Panc1 (cell line): ENCODE measurements at regions of chr10 and their contacts with region 1.

Region 1: DNA sequence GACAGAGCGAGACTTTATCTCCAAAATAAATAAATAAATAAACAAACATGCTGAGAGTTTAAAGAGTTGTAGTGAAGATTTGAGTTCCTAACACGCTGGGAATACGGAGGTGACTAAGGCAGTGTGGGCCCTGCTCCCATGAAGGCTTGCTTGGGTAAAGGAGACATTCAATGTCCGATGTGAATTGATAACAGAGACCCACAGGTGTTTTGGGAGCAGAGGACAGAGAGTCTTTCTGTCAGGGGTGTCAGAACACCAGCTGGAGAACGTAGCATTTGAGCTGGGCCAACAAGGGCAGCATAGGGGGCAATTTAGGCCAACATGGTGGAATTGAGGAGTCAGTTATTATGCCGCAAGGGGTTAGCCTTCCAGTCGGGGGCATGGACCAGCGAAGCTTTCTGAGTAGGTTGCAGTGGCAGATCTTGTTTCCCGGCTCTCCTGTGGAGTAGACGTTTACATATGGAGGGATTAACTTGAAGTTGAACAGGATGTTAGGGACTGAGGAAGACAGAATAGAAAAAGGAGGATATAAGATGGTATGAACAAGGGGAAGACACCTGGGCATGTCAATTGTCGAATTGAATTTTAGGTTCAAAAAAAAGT is 5.6 kb downstream of the PROSER2 start:
- DNase-seq: no peak
- ATAC-seq: no peak
- H3K4me3 ChIP-seq: no peak overlapping the region
- H3K27ac ChIP-seq: no peak overlapping the region
- H3K4me1 ChIP-seq: peaks cover 11% of the 10 kb centered on the region
- H3K27me3 ChIP-seq: peaks cover 2% of the 10 kb centered on the region; the same call in 1 of the 2 replicates
- CTCF ChIP-seq: no peak

Region 2: DNA sequence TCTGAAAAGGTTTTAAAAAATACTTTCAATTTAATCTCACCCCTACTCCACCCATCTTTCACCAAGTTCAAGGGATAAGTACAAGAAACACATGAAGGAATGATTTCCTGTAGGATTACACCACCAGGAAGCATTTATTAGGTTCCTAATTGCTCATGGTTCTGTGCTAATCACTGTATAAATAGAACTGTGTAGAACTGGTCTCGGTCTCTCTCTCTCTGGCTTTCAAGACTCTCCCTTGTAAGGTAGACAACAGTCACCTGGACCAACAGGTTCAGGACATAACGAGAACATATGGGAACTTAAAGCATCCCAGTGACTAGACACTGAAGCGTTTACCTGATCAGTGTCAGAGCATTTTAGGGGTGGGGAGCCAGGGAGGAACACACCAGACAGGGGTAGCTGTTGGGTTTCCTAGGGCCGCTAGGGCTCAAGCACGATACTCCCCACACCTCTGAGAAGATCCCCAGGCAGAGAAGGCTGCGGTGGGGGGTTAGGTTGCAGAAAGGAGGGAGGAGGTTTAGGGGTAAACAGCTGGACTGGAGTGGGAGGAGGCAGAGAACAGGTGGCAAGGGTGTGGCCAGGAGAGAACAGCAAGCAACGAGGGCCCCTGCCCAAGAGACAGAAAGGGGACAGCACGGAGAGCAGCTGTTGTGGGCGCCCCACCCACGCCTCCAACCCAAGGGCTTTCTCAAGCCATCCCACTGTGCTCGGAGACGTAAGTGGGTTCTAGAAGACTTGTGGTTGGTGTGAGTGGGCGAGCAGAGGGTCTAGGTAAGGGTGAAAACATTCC is 164.8 kb before region 1 on chr10:
- CTCF ChIA-PET with region 1: no interaction called
- POLR2A ChIA-PET with region 1: no interaction called
- in situ Hi-C with region 1: no loop called
- intact Hi-C with region 1: no loop called
- DNase-seq: no peak
- ATAC-seq: no peak
- H3K4me3 ChIP-seq: no peak overlapping the region
- H3K27ac ChIP-seq: no peak overlapping the region
- H3K4me1 ChIP-seq: no peaks in the 10 kb centered on the region
- H3K27me3 ChIP-seq: no peaks in the 10 kb centered on the region
- CTCF ChIP-seq: no peak

Region 3: GRCh38 chr10:12027539-12027938 is 198.8 kb after region 1 on chr10:
- CTCF ChIA-PET with region 1: no interaction called
- POLR2A ChIA-PET with region 1: interaction called, 14 read pairs
- in situ Hi-C with region 1: no loop called
- intact Hi-C with region 1: no loop called
- DNase-seq: no peak
- ATAC-seq: no peak
- H3K4me3 ChIP-seq: no peak overlapping the region
- H3K27ac ChIP-seq: no peak overlapping the region
- H3K4me1 ChIP-seq: no peaks in the 10 kb centered on the region
- H3K27me3 ChIP-seq: no peaks in the 10 kb centered on the region
- CTCF ChIP-seq: no peak

Region 4: DNA sequence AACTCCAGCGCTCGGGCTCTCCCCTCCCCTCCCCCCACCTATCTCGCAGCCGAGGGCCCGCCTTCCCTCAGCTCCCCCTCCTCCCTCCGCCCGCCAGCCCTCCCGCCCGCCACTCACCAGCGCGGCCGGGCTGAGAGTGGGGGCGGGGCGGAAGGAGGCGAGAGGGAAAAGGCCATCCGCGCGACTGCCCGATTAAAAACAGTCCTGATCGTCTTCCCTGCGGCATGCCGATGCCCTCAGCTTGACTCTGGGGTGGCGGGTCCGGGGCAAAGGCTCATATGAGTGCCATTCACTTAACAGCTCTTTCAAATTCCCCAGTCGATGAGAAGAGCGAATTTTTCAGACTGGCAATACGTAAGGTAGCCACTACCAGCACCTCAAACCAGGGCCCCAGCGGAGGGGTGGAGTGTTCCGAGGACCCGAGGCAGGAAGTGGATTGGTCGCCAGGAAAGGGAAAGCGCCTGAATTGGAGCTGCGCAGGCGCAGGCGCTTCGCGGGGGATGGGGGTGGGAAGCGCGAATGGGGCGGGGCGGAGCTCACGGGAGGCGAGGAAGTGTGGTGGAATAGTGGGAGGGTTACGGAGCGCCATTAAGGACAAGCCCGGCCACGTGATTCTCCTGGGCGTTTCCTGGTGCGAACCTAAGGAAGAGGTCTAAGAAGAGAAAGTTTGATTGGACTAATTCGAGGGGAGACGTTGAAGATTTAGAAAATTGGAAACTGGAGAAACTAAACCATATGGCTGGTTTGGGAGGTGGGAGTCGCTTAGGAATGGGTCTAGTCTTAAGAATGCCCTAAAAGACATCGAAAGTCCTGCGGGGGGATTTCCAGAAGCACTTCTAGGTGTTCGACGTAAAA is 214.2 kb after region 1 on chr10 and contains the start of gene UPF2:
- CTCF ChIA-PET with region 1: no interaction called
- POLR2A ChIA-PET with region 1: no interaction called
- in situ Hi-C with region 1: no loop called
- intact Hi-C with region 1: no loop called
- DNase-seq: peak; percentile 89
- ATAC-seq: peak; percentile 95
- H3K4me3 ChIP-seq: peak within 1 kb of the TSS; percentile 69 to 91
- H3K27ac ChIP-seq: peak within 1 kb of the TSS; percentile 88
- H3K4me1 ChIP-seq: peaks cover 11% of the 10 kb centered on the region
- H3K27me3 ChIP-seq: no peaks in the 10 kb centered on the region
- CTCF ChIP-seq: no peak
- total RNA-seq, gene UPF2: 19.1 TPM